ENCODE measurements at regions of chr4 and their contacts with region 1.

Region 1: GRCh38 chr4:9704551-9705332 is 76.7 kb upstream of the DRD5 start:
- DNase-seq: peak; percentile 27
- H3K4me3 Mint-ChIP-seq: no peak overlapping the region
- H3K27ac Mint-ChIP-seq: no peak overlapping the region
- H3K4me1 Mint-ChIP-seq: peaks cover 11% of the 10 kb centered on the region
- H3K27me3 Mint-ChIP-seq: no peaks in the 10 kb centered on the region

Region 2: GRCh38 chr4:9691238-9692065 is 13.3 kb before region 1 on chr4:
- CTCF ChIA-PET with region 1: interaction called, 19 read pairs
- POLR2A ChIA-PET with region 1: no interaction called
- intact Hi-C with region 1: no loop called
- DNase-seq: peak; percentile 96
- H3K4me3 Mint-ChIP-seq: peak overlapping the region; percentile 80
- H3K27ac Mint-ChIP-seq: peak overlapping the region; percentile 80
- H3K4me1 Mint-ChIP-seq: peaks cover 21% of the 10 kb centered on the region
- H3K27me3 Mint-ChIP-seq: no peaks in the 10 kb centered on the region